Heart right ventricle (tissue), 16 donors: ENCODE measurements at regions of chr20 and their contacts with region 1.

Region 1: GRCh38 chr20:62191781-62192559 is 9.1 kb downstream of the MTG2 start:
- DNase-seq: peak in 1 of 2 donors; percentile 10
- ATAC-seq: peak in 4 of 8 donors; percentile 11 to 49 (median 27)
- H3K4me3 ChIP-seq: no peak overlapping the region
- H3K27ac ChIP-seq: no peak overlapping the region
- H3K4me1 ChIP-seq: peaks cover 0 to 25% (median 12%) of the 10 kb centered on the region in 9 donors
- H3K27me3 ChIP-seq: no peaks in the 10 kb centered on the region
- CTCF ChIP-seq: no peak

Region 2: GRCh38 chr20:61819921-61820825 is 371.8 kb before region 1 on chr20:
- intact Hi-C with region 1: no loop called
- DNase-seq: no peak
- ATAC-seq: no peak
- H3K4me3 ChIP-seq: no peak overlapping the region
- H3K27ac ChIP-seq: no peak overlapping the region
- H3K4me1 ChIP-seq: no peaks in the 10 kb centered on the region
- H3K27me3 ChIP-seq: peaks cover 0 to 25% (median 2%) of the 10 kb centered on the region in 7 donors
- CTCF ChIP-seq: no peak

Region 3: GRCh38 chr20:62136283-62137091 is 55.5 kb before region 1 on chr20:
- intact Hi-C with region 1: no loop called
- DNase-seq: peak; percentile 56 to 63
- ATAC-seq: peak in 4 of 8 donors; percentile 28 to 48 (median 42)
- H3K4me3 ChIP-seq: no peak overlapping the region
- H3K27ac ChIP-seq: no peak overlapping the region
- H3K4me1 ChIP-seq: peaks cover 26 to 59% (median 49%) of the 10 kb centered on the region in 9 donors
- H3K27me3 ChIP-seq: no peaks in the 10 kb centered on the region
- CTCF ChIP-seq: peak; percentile 29 to 86 (median 79)

Region 4: DNA sequence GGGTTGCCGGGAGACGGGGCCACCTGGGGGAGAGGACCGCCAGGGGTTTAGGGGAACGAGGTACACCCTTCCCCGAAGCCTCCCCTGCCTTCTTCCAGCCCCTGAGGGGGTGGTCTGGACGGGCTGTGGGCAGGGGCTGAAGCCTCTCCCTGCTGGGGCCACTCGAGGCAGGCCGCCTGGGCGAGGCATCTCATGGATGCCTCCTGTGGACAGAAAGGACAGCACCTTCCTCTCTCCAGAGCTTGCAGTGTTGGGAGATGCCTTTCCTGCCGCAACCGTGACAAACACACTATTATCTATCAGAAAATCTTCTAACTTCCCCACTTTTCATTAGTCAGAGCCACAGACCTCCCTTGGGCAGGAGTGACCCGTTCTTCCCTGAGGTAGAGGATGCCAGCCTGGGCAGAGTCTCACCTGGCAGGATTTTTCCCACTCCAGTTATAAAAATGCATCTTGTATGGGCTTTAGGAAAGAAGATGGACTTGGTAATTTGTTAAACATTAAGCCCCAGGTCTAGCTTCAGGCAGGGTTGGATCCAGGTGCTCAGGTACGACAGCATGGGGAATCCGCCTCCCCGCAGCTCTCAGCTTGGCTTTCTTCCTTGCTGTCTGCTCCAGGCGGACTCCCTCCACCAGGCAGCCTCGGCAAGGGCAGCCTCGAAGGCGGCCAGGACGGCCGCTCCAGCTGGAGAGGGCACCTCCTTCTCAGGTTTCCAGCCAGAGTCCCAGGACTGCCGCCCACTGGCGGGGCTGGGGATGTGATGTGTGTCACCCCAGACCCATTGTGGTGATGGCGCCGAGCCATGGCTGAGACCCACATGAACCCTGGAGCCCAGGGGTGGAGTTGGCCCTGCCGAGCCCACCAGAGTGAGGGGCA is 17.1 kb after region 1 on chr20:
- intact Hi-C with region 1: loop called in 1 of 10 experiments (anchors 2 kb)
- DNase-seq: peak in 1 of 2 donors; percentile 9
- ATAC-seq: no peak
- H3K4me3 ChIP-seq: no peak overlapping the region
- H3K27ac ChIP-seq: no peak overlapping the region
- H3K4me1 ChIP-seq: no peaks in the 10 kb centered on the region
- H3K27me3 ChIP-seq: peaks cover 3 to 40% (median 28%) of the 10 kb centered on the region in 7 donors
- CTCF ChIP-seq: no peak